ENCODE measurements at regions of chr3 and their contacts with region 1.

Region 1: DNA sequence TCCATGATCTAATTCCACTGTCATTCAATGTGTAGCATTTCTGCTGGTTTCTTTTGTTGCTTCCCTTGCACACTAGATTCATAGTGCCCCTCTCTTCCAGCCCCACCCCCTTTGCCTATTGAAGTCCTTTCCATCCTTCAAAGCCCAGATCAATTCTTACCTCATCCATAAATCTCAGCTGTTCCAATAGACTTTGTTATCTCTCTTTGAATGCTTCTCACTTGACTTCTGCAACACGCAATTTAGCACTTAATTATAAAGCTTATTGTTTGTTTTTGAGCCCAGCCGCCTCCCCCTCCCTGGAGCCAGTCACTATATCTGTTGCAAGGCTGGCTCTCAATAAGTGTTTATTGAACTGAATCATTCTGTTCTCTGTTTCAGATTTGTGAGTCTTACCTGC is 174.6 kb upstream of the TBL1XR1 start:
- DNase-seq: no peak
- ATAC-seq: no peak
- H3K4me3 Mint-ChIP-seq: no peak overlapping the region
- H3K27ac Mint-ChIP-seq: no peak overlapping the region
- H3K4me1 Mint-ChIP-seq: peaks cover 29% of the 10 kb centered on the region
- H3K27me3 Mint-ChIP-seq: no peaks in the 10 kb centered on the region
- CTCF ChIP-seq: no peak

Region 2: DNA sequence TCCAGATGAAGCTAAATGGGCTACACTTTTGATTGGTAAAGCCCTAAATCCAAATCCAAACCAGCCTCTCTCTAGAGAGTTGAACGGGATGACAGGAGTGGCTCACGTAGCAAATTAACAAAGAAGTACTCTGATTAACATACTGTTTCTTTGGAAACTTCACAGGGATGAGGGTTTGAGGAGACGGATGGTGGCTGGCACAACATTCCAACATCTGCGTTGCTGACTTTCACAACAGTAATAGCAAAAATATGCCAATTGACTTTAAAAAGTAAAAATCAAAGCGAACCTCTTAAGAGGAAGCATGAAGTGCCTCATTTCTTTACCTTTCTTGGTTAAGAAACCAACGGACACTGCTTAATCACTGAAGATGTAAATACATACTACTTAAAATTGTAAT is 356.0 kb before region 1 on chr3:
- CTCF ChIA-PET with region 1: no interaction called
- POLR2A ChIA-PET with region 1: interaction called, 14 read pairs
- intact Hi-C with region 1: no loop called
- DNase-seq: no peak
- ATAC-seq: no peak
- H3K4me3 Mint-ChIP-seq: no peak overlapping the region
- H3K27ac Mint-ChIP-seq: no peak overlapping the region
- H3K4me1 Mint-ChIP-seq: no peaks in the 10 kb centered on the region
- H3K27me3 Mint-ChIP-seq: no peaks in the 10 kb centered on the region
- CTCF ChIP-seq: no peak

Measured in activated B cell treated with CpG ODN at 0.5 μM for 24 hours (primary cell).